ENCODE measurements at regions of chr17 and their contacts with region 1.

Region 1: GRCh38 chr17:27455914-27456680 is at the start of gene KSR1:
- DNase-seq: peak; percentile 66 to 92 (median 77)
- ATAC-seq: peak; percentile 92
- H3K4me3 ChIP-seq: peak within 1 kb of the TSS; percentile 82
- H3K4me3 Mint-ChIP-seq: peak within 1 kb of the TSS; percentile 87
- H3K27ac ChIP-seq: no peak within 1 kb of the TSS
- H3K27ac Mint-ChIP-seq: peak within 1 kb of the TSS; percentile 60
- H3K4me1 ChIP-seq: peaks cover 32% of the 10 kb centered on the region
- H3K4me1 Mint-ChIP-seq: peaks cover 16% of the 10 kb centered on the region
- H3K27me3 ChIP-seq: no peaks in the 10 kb centered on the region
- H3K27me3 Mint-ChIP-seq: no peaks in the 10 kb centered on the region
- CTCF ChIP-seq: peak; percentile 46
- total RNA-seq, gene KSR1: 19.4 to 25.3 TPM

Region 2: GRCh38 chr17:27353461-27354050 is 102.5 kb before region 1 on chr17:
- CTCF ChIA-PET with region 1: no interaction called
- POLR2A ChIA-PET with region 1: no interaction called
- intact Hi-C with region 1: loop called in 1 of 2 experiments (anchors 2 kb)
- DNase-seq: peak; percentile 64 to 94 (median 82)
- ATAC-seq: peak; percentile 91
- H3K4me3 ChIP-seq: peak overlapping the region; percentile 67
- H3K4me3 Mint-ChIP-seq: peak overlapping the region; percentile 88
- H3K27ac ChIP-seq: peak overlapping the region; percentile 72 to 89
- H3K27ac Mint-ChIP-seq: peak overlapping the region; percentile 65
- H3K4me1 ChIP-seq: peaks cover 20% of the 10 kb centered on the region
- H3K4me1 Mint-ChIP-seq: peaks cover 19% of the 10 kb centered on the region
- H3K27me3 ChIP-seq: no peaks in the 10 kb centered on the region
- H3K27me3 Mint-ChIP-seq: no peaks in the 10 kb centered on the region
- CTCF ChIP-seq: peak; percentile 73

Region 3: GRCh38 chr17:27390540-27390939 is 65.6 kb before region 1 on chr17:
- CTCF ChIA-PET with region 1: no interaction called
- POLR2A ChIA-PET with region 1: no interaction called
- intact Hi-C with region 1: no loop called
- DNase-seq: no peak
- ATAC-seq: no peak
- H3K4me3 ChIP-seq: no peak overlapping the region
- H3K4me3 Mint-ChIP-seq: no peak overlapping the region
- H3K27ac ChIP-seq: no peak overlapping the region
- H3K27ac Mint-ChIP-seq: no peak overlapping the region
- H3K4me1 ChIP-seq: no peaks in the 10 kb centered on the region
- H3K4me1 Mint-ChIP-seq: no peaks in the 10 kb centered on the region
- H3K27me3 ChIP-seq: peaks cover 0 to 2% of the 10 kb centered on the region in 2 experiments
- H3K27me3 Mint-ChIP-seq: peaks cover 14% of the 10 kb centered on the region
- CTCF ChIP-seq: no peak

Region 4: GRCh38 chr17:27473748-27474609 is 17.9 kb after region 1 on chr17:
- CTCF ChIA-PET with region 1: interaction called, 29 read pairs
- POLR2A ChIA-PET with region 1: interaction called, 29 read pairs
- intact Hi-C with region 1: loop called in 1 of 2 experiments (anchors 2 kb)
- DNase-seq: peak in 11 of 14 experiments; percentile 25 to 91 (median 57)
- ATAC-seq: no peak
- H3K4me3 ChIP-seq: peak overlapping the region; percentile 33
- H3K4me3 Mint-ChIP-seq: peak overlapping the region; percentile 75
- H3K27ac ChIP-seq: peak overlapping the region; percentile 61 to 92
- H3K27ac Mint-ChIP-seq: peak overlapping the region; percentile 95
- H3K4me1 ChIP-seq: peaks cover 72% of the 10 kb centered on the region
- H3K4me1 Mint-ChIP-seq: peaks cover 65% of the 10 kb centered on the region
- H3K27me3 ChIP-seq: no peaks in the 10 kb centered on the region
- H3K27me3 Mint-ChIP-seq: no peaks in the 10 kb centered on the region
- CTCF ChIP-seq: no peak

Region 5: GRCh38 chr17:27526604-27527230 is 70.6 kb after region 1 on chr17:
- CTCF ChIA-PET with region 1: no interaction called
- POLR2A ChIA-PET with region 1: no interaction called
- intact Hi-C with region 1: loop called in 1 of 2 experiments (anchors 10 kb)
- DNase-seq: peak in 5 of 14 experiments; percentile 7 to 54 (median 43)
- ATAC-seq: peak; percentile 48
- H3K4me3 ChIP-seq: no peak overlapping the region
- H3K4me3 Mint-ChIP-seq: no peak overlapping the region
- H3K27ac ChIP-seq: no peak overlapping the region
- H3K27ac Mint-ChIP-seq: no peak overlapping the region
- H3K4me1 ChIP-seq: peaks cover 11% of the 10 kb centered on the region
- H3K4me1 Mint-ChIP-seq: peaks cover 39% of the 10 kb centered on the region
- H3K27me3 ChIP-seq: no peaks in the 10 kb centered on the region
- H3K27me3 Mint-ChIP-seq: no peaks in the 10 kb centered on the region
- CTCF ChIP-seq: no peak

Region 6: DNA sequence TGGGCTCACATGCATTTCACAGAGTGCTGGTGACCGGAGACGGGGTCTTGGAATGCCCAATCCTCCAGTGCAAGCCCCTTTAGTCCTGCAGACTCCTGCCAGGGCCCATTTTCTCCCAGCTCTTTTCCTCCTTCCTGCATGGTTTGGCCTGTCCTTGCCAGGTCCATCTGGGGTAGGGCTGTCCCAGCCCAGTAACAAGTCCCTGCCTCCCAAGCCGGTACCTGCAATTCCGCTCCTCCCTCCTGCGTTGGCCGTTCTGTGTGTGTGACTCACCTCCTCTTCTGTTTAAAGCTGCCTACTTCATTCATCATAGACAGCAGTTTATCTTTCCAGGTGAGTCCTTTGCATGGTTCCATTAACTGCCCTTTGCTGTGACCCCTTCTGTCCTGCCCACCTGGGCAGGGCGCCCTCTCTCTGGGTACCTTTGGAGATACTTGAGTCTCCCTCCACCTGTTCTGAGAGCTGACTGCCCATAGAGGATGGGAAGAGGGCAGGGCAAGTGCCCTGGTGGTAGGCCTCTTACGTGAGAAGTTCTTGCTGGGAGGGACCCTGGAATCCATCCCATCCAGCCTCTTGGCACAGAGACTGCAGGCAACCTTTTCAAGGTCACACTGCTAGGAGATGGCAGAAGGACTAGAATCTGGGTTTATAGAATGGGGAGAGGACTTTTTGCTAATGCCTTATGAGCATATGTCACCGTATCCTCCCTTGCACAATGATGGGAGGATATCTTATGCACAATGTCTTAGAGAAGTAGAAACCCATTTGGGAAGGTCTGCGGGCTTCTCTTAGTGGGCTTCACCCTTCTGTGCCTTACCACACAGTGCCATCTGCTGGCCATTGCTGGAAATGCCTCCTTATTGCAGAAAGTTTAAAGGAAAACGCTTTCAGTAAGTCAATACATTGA is 145.2 kb after region 1 on chr17:
- CTCF ChIA-PET with region 1: interaction called, 31 read pairs
- POLR2A ChIA-PET with region 1: interaction called, 8 read pairs
- intact Hi-C with region 1: loop called (anchors 2 kb)
- DNase-seq: peak; percentile 65 to 89 (median 80)
- ATAC-seq: peak; percentile 61
- H3K4me3 ChIP-seq: no peak overlapping the region
- H3K4me3 Mint-ChIP-seq: no peak overlapping the region
- H3K27ac ChIP-seq: no peak overlapping the region
- H3K27ac Mint-ChIP-seq: no peak overlapping the region
- H3K4me1 ChIP-seq: peaks cover 6% of the 10 kb centered on the region
- H3K4me1 Mint-ChIP-seq: peaks cover 4% of the 10 kb centered on the region
- H3K27me3 ChIP-seq: no peaks in the 10 kb centered on the region
- H3K27me3 Mint-ChIP-seq: no peaks in the 10 kb centered on the region
- CTCF ChIP-seq: peak; percentile 90